Posterior vena cava (tissue), 2 donors: ENCODE measurements at regions of chrX and their contacts with region 1.

Region 1: DNA sequence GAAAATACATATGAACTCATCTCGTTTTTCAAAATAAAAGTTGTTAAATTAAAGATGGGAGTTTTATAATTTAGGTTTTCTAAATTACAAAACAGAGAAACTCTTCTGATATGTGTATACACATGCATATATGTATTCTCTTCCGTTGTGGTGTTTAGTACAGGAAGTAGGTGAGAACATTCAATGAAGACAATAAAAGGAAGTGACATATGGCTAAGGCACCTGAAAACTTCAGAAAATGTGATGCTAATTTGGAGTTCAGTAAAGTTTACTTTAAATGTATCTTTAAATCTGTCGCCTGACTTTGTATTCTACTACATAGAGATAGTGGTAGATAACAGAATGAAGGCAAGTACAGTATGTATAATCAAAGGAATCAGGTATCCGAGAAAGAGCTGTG is 33.5 kb upstream of the ITM2A start:
- DNase-seq: no peak

Region 2: GRCh38 chrX:78064152-78064551 is 1336.5 kb before region 1 on chrX:
- intact Hi-C with region 1: loop called in 1 of 2 experiments (anchors 5 kb)
- DNase-seq: no peak